Lower leg skin (tissue), 4 donors: ENCODE measurements at regions of chr2 and their contacts with region 1.

Region 1: GRCh38 chr2:154847703-154848102 is 149.2 kb downstream of the KCNJ3 start:
- DNase-seq: no peak
- H3K4me3 ChIP-seq: no peak overlapping the region
- CTCF ChIP-seq: no peak
- POLR2A ChIP-seq: no peak

Region 2: DNA sequence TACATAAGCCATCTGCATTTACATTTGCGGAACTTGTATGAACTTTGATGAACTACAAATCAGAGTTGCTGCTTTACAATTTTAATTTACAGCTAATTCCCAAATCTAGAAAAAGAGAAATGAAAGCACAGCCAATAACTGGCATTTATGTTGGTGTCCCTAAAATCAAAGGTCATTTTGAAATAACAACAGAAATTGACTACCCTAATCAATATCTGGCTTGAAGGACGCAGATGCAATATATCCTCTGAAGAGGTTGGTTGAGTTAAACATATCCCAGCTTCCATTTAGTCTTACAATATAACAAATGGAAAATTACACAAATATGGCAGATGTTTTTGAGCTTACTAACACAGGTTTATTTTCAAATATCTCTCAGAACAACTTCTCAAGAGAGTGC is 28.3 kb after region 1 on chr2:
- intact Hi-C with region 1: loop called (anchors 2 kb)
- DNase-seq: no peak
- H3K4me3 ChIP-seq: no peak overlapping the region
- CTCF ChIP-seq: no peak
- POLR2A ChIP-seq: no peak